AG04450 (cell line): ENCODE measurements at regions of chr17 and their contacts with region 1.

Region 1: GRCh38 chr17:2282297-2282873 is 21.2 kb downstream of the SMG6 start:
- DNase-seq: peak; percentile 74
- H3K4me3 ChIP-seq: no peak overlapping the region
- H3K27ac ChIP-seq: peak overlapping the region; percentile 58
- H3K27me3 ChIP-seq: no peaks in the 10 kb centered on the region
- CTCF ChIP-seq: peak; percentile 64

Region 2: DNA sequence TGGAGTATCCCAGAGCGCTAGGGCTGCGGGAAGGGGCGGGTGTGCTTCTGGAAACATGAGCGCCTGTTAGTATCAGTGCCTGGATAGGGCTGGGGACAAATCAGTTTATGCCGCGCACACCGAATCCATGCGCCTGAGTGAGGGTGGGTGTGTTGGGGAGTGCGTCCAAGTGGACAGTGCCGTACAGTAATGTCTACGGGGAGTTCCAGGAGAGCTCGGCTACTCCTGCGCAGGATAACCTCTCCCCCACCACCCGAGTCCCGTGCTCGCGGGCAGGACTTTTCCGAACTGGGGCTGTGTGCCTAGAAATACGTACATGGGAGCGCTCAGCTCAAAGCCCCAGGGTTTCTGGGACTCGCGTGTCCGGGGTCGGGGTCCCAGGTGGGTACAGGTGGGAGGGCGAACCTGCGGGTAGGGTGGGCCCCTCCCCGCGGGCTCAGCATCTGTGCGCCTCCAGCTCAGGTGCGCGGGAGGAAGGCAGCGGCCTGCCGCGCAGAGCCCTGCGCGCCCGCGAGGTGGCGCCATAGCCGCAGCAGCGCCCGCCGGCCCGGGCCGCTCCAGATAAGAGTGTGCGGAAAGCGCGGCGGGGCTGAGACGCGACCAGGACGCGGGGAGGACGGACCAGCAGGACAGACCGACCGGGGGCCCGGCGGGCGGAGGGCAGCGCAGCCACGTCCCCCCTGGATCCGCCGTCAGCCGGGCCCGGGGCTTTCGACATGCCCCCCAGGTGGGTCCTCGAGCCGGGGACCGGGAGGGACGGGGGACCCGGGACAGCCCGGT is 227.7 kb before region 1 on chr17 and contains the start of gene HIC1:
- CTCF ChIA-PET with region 1: interaction called, 54 read pairs
- POLR2A ChIA-PET with region 1: interaction called, 9 read pairs
- DNase-seq: no peak
- H3K4me3 ChIP-seq: peak within 1 kb of the TSS; percentile 72
- H3K27ac ChIP-seq: peak within 1 kb of the TSS; percentile 47
- H3K27me3 ChIP-seq: peaks cover 4% of the 10 kb centered on the region
- CTCF ChIP-seq: peak; percentile 72
- polyA plus RNA-seq, gene HIC1: 12.7 and 14.4 TPM in 2 replicates

Region 3: DNA sequence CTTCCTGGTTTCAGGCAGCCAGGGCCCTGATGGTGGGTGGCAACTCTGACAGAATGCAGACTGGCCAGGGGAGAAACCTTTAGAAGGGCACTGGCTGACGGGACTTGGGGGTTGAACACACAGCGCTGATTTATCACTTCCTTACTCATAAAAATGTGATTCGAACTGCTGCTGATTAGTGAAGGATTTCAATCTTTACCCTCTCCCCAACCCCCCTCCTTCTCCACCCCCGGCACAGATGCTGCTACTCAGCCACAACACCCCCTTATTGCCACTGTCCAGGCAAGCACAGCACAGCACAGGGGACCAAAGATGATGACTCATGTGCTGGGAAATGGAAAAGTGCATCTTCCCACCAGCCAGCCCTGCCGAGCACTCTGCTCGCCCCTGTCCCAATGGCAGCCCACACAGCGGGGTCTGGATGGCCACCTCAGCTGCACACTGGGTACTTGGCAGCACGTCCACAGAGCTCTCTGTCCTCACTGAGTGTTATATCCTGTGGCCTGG is 48.9 kb before region 1 on chr17:
- CTCF ChIA-PET with region 1: interaction called, 10 read pairs
- POLR2A ChIA-PET with region 1: no interaction called
- DNase-seq: no peak
- H3K4me3 ChIP-seq: no peak overlapping the region
- H3K27ac ChIP-seq: peak overlapping the region; percentile 11
- H3K27me3 ChIP-seq: no peaks in the 10 kb centered on the region
- CTCF ChIP-seq: no peak

Region 4: DNA sequence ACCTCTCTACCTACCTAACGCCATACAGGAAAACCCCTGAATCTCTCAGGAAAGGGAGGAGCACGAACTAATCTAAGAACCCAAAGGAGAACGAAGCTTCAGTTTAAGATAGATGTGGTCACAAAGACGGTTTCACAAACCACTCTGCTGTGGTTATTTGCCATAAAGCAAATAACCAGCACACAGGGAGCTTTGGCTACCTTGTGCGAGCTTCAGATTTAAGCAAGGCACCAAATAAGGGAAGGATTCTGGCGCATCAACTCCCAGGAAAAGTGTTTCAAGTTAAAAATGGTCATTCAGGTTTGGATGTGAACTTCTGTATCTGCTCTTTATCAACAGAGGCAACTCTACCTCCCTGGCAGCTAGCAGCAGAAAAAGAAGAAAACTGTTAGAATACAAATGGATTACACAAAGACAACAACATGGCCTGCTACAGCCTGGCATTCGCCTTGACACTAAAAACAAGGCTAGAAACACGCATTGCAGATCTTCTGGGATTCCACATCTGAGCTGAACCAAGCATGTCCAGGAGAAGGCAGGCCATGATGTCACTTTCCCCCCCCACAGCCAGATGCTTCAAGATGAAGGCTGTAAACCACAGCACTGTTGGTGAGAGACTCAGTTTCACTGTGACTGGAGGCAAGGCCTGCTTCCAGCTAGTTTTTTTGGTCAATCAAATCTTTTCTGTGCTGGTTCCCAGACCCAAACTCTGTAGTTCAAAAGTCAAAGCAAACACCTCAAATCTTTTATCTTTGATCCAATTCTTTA is 22.4 kb before region 1 on chr17:
- CTCF ChIA-PET with region 1: interaction called, 4 read pairs
- POLR2A ChIA-PET with region 1: interaction called, 12 read pairs
- DNase-seq: no peak
- H3K4me3 ChIP-seq: no peak overlapping the region
- H3K27ac ChIP-seq: no peak overlapping the region
- H3K27me3 ChIP-seq: no peaks in the 10 kb centered on the region
- CTCF ChIP-seq: no peak